AG04449 (cell line): ENCODE measurements at regions of chr16 and their contacts with region 1.

Region 1: DNA sequence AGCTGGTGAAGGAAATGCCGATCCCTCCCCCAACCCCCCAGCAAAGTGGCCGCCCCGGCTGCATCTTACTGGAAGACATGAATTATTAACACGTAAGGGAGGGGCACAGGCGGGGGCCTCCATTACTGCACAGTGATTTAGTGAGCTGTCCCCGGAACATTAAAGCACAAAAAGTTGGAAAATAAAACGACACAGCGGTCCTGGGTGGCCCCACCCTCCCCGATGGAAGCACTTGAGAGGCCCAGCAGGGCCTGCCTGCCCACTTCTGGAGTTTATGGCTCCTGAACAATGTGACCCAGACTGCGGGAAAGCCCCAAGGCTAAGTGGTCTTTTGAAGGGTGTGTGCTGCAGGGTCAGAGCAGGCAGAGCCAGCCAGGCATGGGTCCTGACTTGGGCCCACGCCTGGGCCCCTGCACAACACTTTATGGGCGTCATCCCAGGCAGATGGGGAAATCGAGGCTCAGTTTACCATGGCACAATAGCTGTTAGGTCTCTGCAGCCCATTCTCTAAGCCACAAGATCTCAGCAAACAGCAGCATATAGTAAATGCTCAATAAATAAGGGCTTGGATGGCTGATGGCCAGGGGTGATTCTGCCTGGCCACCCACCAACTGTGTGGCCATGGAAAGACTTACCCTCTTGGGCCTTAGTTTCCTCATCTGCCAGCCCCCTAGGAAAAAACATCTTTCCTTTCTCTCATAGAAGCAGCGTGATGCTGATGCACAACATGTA is 22.8 kb downstream of the CCDC102A start:
- DNase-seq: no peak
- H3K4me3 ChIP-seq: no peak overlapping the region
- CTCF ChIP-seq: no peak

Region 2: DNA sequence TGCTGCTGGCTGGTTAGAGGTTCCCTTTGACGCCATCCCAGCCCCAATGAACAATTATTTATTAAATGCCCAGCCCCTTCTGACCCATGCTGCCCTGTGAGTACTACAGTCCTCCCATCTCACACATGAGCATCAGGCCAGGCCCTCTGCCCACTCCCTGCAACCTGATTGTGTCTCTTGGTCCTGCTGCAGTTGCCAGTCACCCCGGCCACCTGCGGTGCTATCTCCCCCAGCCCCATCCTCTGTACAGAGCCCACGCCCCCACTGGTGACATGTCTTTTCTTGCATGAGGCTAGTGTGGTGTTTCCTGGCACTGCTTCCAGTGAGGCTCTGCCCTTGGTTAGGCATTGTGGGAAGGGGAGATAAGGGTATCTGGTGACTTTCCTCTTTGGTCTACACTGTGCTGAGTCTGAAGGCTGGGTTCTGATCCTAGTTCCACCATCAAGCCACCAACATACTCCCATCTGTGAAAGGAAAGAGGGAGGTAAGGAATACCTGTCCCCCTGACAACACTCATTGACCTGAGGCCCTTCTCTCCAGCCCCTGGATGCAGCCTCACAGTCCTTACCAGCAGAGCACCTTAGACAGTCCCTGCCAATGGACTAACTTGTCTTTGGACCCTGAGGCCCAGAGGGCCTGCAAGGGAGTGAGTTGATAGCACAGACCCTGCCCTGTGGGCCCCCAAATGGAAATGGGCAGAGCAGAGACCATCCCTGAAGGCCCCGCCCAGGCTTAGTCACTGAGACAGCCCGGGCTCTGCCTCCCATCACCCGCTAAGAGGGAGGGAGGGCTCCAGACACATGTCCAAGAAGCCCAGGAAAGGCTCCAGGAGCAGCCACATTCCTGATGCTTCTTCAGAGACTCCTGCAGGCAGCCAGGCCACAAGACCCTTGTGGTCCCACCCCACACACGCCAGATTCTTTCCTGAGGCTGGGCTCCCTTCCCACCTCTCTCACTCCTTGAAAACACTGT is 130.0 kb before region 1 on chr16:
- CTCF ChIA-PET with region 1: no interaction called
- POLR2A ChIA-PET with region 1: no interaction called
- DNase-seq: no peak
- H3K4me3 ChIP-seq: no peak overlapping the region
- CTCF ChIP-seq: no peak

Region 3: DNA sequence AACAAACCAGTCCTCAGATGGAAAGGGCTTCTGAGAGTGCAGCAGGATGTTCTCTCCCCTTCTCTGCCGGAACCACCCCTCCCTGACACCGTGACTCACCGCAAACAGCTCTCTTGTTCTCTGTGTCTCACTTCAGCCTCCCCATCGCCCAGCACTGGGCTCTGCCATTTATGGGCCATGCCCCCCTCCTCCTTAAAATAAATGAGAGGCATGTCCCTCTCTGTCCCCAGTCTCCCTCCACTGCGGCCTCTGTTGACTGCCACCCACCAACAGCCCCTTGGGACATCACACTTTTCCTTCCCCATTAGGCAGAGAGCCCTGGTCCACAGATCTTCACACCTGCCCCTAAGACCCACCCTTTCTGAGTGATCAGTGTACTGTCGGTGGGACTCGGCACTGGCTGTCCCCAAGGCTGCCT is 16.6 kb after region 1 on chr16:
- CTCF ChIA-PET with region 1: interaction called, 48 read pairs
- POLR2A ChIA-PET with region 1: interaction called, 3 read pairs
- DNase-seq: no peak
- H3K4me3 ChIP-seq: no peak overlapping the region
- CTCF ChIP-seq: no peak

Region 4: DNA sequence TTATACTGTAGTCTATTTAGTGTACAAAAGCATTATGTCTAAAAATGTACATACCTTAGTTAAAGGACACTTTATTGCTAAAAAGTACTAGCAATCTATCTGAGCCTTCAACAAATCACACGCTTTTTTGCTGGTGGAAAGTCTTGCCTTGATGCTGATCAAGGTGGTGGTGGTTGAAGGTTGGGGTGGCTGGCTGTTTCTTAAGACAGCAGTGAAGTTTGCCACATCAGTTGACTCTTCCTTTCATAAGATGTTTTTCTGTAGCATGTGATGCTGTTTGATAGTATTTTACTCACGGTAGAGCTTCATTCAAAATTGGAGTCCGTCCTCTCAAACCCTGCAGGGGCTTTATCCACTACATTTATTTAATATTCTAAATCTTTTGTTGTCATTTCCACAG is 37.5 kb after region 1 on chr16:
- CTCF ChIA-PET with region 1: no interaction called
- POLR2A ChIA-PET with region 1: no interaction called
- DNase-seq: no peak
- H3K4me3 ChIP-seq: no peak overlapping the region
- CTCF ChIP-seq: no peak